ENCODE measurements at regions of chr4 and their contacts with region 1.

Region 1: GRCh38 chr4:52712172-52712990 is 38.8 kb downstream of the ERVMER34-1 start:
- DNase-seq: peak; percentile 98 to 99
- ATAC-seq: peak; percentile 98 to 100 (median 99)
- H3K4me3 ChIP-seq: peak overlapping the region; percentile 77 to 97 (median 88)
- H3K27ac ChIP-seq: peak overlapping the region; percentile 91 to 100 (median 96)
- H3K4me1 ChIP-seq: peaks cover 0 to 41% (median 29%) of the 10 kb centered on the region in 9 donors
- H3K27me3 ChIP-seq: no peaks in the 10 kb centered on the region
- CTCF ChIP-seq: no peak

Region 2: DNA sequence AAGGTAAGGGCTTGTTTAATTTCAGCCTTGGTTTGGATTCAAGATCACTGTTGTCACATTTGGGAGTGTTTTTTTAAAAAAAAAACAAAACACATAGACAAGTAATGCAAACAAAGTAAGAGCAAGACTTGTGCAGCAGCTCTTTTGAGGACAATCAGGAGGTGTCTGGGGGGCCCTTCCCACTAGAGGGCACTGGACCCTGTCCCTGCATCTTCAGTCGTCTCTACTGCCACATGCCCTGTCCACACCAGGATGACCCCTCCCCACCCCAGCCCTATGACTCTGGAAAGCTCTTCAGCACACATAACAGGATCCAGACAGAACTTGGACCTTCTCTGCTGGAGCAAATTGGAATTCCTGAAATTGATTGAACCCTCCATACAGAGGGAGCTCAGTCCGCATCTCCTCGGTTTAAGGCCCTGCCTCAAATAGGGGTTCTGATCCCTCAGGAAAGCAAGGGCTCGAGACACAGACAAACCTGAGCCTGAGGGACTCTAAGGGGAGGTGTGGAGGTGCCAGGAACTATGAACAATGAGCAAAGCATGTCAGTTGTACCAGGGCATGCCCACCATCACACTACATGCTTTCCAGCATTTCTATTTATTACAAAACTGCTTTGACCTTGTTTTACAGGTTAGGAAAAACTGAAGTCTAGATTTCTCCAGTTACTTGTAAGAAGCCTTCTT is 124.1 kb before region 1 on chr4:
- intact Hi-C with region 1: loop called in 1 of 10 experiments (anchors 5 kb)
- DNase-seq: peak; percentile 24 to 51
- ATAC-seq: peak; percentile 23 to 70 (median 64)
- H3K4me3 ChIP-seq: no peak overlapping the region
- H3K27ac ChIP-seq: peak overlapping the region in 8 of 10 donors; percentile 31 to 90 (median 86)
- H3K4me1 ChIP-seq: peaks cover 0 to 44% (median 16%) of the 10 kb centered on the region in 9 donors
- H3K27me3 ChIP-seq: no peaks in the 10 kb centered on the region
- CTCF ChIP-seq: peak; percentile 24 to 67 (median 59)

Measured in heart right ventricle (tissue), 16 donors.